Activated CD4-positive, alpha-beta T cell treated with anti-CD3 and anti-CD28 coated beads for 36 hours (primary cell): ENCODE measurements at regions of chr15 and their contacts with region 1.

Region 1: DNA sequence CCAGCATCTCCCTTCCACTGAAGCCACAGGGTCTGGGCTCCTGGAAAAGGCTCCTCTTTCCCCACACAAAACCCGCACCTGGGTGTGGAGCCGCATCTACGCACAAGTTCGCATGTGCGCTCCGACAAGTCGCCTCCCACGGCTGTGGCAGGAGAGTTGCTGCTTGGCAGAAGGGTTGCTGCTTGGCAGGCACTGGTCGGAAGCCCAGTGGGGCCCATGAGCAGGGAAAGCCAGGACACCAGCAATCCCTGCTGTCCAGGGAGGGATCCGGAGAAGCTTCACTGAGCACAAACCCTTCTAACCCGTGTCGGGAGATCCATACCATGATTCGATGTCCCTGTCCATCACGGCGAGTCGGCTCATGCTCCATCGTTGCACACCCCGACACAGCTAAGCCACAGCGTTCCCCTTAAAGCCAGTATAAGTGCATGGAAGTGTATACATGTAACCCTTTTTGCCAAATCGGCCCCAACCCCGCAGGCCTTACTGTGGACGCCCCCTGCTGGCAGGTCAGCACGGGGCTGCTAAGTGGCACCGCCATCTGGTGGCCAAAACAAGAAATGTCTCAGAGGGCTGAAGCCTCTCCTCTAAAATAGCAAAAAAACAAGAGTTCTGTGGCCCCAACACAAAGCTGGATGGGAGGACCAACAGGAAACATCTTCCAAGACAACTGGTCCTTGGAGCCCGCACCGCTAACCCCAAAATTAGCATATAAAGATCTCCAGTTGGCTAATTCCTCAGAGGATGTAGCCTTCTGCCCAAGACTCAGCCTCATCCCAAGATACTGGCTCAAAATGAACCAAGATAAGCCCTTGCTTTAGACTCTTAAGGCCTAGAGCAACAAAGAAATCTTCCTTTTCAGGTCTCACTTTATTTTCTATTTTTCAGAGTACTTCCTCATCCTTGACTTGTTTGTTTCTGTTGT is 8.3 kb downstream of the ANKRD63 start:
- DNase-seq: peak; percentile 93
- ATAC-seq: peak; percentile 79
- H3K4me3 Mint-ChIP-seq: no peak overlapping the region
- H3K27ac Mint-ChIP-seq: no peak overlapping the region
- H3K4me1 Mint-ChIP-seq: no peaks in the 10 kb centered on the region
- H3K27me3 Mint-ChIP-seq: peaks cover 14% of the 10 kb centered on the region

Region 2: GRCh38 chr15:40038638-40039543 is 235.7 kb before region 1 on chr15 and contains the start of gene SRP14:
- CTCF ChIA-PET with region 1: interaction called, 27 read pairs
- POLR2A ChIA-PET with region 1: no interaction called
- intact Hi-C with region 1: no loop called
- DNase-seq: peak; percentile 95
- ATAC-seq: peak; percentile 96
- H3K4me3 Mint-ChIP-seq: peak within 1 kb of the TSS; percentile 97
- H3K27ac Mint-ChIP-seq: peak within 1 kb of the TSS; percentile 98
- H3K4me1 Mint-ChIP-seq: peaks cover 49% of the 10 kb centered on the region
- H3K27me3 Mint-ChIP-seq: no peaks in the 10 kb centered on the region
- total RNA-seq, gene SRP14: 124 to 157 TPM

Region 3: DNA sequence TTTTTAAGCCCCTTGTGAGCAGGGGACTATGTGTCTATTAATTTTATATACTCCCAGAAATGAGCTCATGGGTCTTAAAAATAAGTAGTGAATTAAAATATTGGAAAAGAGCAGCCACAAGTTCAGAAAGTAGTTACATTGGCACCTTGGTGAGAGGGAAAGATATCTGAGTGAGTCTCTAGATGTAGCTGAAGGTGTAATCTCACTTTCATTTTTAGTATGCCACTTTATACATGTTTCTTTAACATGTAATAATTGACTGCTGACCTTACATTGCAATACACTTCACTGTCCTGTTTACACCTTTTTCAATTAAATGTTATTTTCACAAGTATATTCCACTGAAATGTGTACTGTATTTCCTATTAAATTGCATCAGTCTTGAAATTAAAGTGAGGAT is 47.9 kb before region 1 on chr15:
- CTCF ChIA-PET with region 1: interaction called, 24 read pairs
- POLR2A ChIA-PET with region 1: no interaction called
- intact Hi-C with region 1: no loop called
- DNase-seq: no peak
- ATAC-seq: peak; percentile 80
- H3K4me3 Mint-ChIP-seq: no peak overlapping the region
- H3K27ac Mint-ChIP-seq: no peak overlapping the region
- H3K4me1 Mint-ChIP-seq: peaks cover 12% of the 10 kb centered on the region
- H3K27me3 Mint-ChIP-seq: no peaks in the 10 kb centered on the region

Region 4: DNA sequence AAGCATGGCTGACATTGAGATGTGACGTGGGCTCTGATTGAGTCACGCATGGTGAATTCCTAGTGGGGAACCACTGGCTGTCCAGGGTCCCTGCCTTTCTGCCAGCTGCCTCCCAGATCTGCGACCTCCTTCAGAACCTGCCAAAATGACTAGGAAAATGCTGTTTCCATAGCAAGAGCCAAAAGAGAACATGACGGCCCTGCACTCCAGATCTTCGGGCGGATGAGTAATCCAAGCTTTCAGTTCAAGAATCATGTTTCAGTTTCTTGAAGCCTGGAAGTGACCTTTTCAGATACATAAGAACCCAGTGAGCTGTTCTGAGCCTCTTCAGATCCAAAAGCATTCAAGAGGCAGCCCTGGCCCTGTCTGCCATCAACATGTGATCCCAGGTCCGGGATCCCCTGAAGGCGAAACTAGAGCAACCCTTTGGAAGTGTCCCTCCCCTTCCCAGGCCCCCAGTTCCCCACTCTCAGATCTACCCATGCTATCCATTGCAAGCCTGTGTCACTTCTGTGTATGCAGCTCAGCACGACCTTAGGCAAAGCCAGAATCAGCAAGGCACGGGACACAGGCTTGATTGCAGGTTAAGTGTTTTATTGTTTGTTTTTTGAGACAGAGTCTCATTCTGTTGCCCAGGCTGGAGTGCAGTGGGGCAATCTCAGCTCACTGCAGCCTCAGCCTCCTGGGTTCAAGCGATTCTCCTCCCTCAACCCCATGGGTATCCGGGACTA is 11.4 kb before region 1 on chr15:
- CTCF ChIA-PET with region 1: interaction called, 42 read pairs
- POLR2A ChIA-PET with region 1: no interaction called
- intact Hi-C with region 1: no loop called
- DNase-seq: no peak
- ATAC-seq: no peak
- H3K4me3 Mint-ChIP-seq: no peak overlapping the region
- H3K27ac Mint-ChIP-seq: no peak overlapping the region
- H3K4me1 Mint-ChIP-seq: no peaks in the 10 kb centered on the region
- H3K27me3 Mint-ChIP-seq: no peaks in the 10 kb centered on the region

Region 5: GRCh38 chr15:40323239-40323952 is 48.8 kb after region 1 on chr15 and contains the start of gene INAFM2:
- CTCF ChIA-PET with region 1: interaction called, 393 read pairs
- POLR2A ChIA-PET with region 1: no interaction called
- intact Hi-C with region 1: no loop called
- DNase-seq: peak; percentile 92
- ATAC-seq: peak; percentile 87
- H3K4me3 Mint-ChIP-seq: peak within 1 kb of the TSS; percentile 71
- H3K27ac Mint-ChIP-seq: no peak within 1 kb of the TSS
- H3K4me1 Mint-ChIP-seq: peaks cover 25% of the 10 kb centered on the region
- H3K27me3 Mint-ChIP-seq: no peaks in the 10 kb centered on the region
- total RNA-seq, gene INAFM2: 9.9 to 11.2 TPM

Region 6: GRCh38 chr15:40421246-40422157 is 146.9 kb after region 1 on chr15:
- CTCF ChIA-PET with region 1: interaction called, 19 read pairs
- POLR2A ChIA-PET with region 1: no interaction called
- intact Hi-C with region 1: loop called (anchors 1 kb)
- DNase-seq: peak; percentile 91
- ATAC-seq: peak; percentile 98
- H3K4me3 Mint-ChIP-seq: no peak overlapping the region
- H3K27ac Mint-ChIP-seq: no peak overlapping the region
- H3K4me1 Mint-ChIP-seq: no peaks in the 10 kb centered on the region
- H3K27me3 Mint-ChIP-seq: no peaks in the 10 kb centered on the region